ENCODE measurements at regions of chr4 and their contacts with region 1.

Region 1: DNA sequence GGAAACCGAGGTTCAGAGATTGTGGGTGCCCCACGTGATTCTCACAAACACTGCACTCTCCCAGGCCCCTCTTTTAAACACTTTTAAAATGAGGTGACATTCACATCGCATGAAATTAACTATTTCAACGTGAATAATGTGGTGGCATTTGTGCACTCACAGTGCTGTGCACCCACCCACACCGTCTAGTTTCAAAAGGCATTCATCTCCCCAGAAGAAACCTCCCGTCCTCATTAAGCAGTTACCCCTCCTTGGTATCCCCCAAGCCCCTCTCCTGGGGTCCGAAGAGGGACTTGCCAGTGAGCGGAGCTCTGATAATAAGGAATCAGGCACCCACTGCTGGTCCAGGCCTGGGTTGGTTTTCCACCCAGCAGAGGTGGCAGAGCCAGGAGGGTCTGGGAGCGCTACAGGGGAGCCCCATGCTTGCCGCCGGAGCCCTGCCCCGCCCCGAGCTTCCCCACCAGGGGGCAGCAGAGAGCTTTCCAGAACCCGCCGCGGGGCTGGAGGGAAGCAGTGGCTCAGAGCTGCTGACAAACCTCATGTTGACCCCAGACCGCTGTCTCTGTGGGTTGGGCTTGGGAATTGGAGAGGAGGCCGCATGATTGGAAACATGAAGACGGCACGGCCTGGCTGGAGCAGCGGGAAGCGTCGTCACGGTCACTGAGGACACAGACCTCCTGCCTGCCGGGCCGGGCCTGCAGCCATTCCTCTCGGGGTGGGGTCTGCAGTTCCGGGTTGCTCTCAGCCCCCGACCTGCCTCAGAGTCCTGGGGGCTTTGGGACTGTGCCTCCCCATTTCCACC is 27.5 kb upstream of the HTRA3 start:
- DNase-seq: peak; percentile 65 to 90 (median 77)
- ATAC-seq: peak; percentile 82
- H3K4me3 ChIP-seq: no peak overlapping the region
- H3K4me3 Mint-ChIP-seq: no peak overlapping the region
- H3K27ac ChIP-seq: no peak overlapping the region
- H3K27ac Mint-ChIP-seq: peak overlapping the region; percentile 22
- H3K4me1 ChIP-seq: peaks cover 9% of the 10 kb centered on the region
- H3K4me1 Mint-ChIP-seq: peaks cover 12% of the 10 kb centered on the region
- H3K27me3 ChIP-seq: no peaks in the 10 kb centered on the region
- H3K27me3 Mint-ChIP-seq: no peaks in the 10 kb centered on the region
- CTCF ChIP-seq: peak; percentile 95

Region 2: DNA sequence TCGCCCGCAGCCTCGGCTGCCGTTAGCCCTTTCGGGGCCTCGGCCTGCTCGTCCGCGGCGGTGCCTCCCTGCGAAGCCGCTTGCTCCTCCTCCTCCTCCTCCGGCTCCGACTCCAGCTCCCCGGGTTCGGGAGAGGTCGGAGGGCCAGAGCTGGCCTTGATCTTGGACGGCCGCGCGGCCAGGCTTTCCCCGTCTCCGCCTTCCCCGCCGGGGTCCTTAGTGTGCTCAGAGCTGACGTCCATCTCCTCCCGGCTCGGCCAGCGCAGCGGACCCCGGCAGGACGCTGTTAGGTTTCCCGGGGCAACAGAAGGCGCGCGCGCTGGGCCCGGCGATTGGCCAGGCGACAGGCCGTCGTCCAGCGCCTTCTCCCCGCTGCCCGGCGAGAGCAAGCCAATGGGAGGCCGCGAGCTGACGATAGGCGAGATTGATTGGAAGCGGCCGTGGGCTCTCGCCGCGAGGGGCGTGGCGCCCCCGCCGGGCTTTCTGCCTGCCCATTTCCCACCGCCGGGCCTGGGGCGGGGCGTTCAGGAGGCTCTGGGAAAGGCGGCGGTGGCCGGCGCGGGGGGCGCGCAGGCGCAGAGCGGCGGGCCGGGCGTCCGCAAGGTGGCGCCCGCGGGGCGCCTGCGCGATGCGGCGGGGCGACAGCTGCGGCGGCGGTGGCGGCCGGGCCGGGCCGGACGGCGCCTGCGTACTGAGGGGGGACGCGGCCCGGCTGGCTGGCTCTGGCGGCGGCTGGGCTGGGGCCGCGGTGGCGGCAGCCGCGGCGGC is 1199.2 kb before region 1 on chr4 and contains the start of gene TADA2B:
- CTCF ChIA-PET with region 1: no interaction called
- POLR2A ChIA-PET with region 1: no interaction called
- intact Hi-C with region 1: no loop called
- DNase-seq: peak; percentile 74 to 95 (median 89)
- ATAC-seq: peak; percentile 76
- H3K4me3 ChIP-seq: peak within 1 kb of the TSS; percentile 83 to 94
- H3K4me3 Mint-ChIP-seq: peak within 1 kb of the TSS; percentile 91
- H3K27ac ChIP-seq: peak within 1 kb of the TSS; percentile 63 to 84
- H3K27ac Mint-ChIP-seq: peak within 1 kb of the TSS; percentile 88
- H3K4me1 ChIP-seq: peaks cover 40% of the 10 kb centered on the region
- H3K4me1 Mint-ChIP-seq: peaks cover 44% of the 10 kb centered on the region
- H3K27me3 ChIP-seq: no peaks in the 10 kb centered on the region
- H3K27me3 Mint-ChIP-seq: no peaks in the 10 kb centered on the region
- CTCF ChIP-seq: no peak
- total RNA-seq, gene TADA2B: 41.9 to 45.4 TPM

Region 3: GRCh38 chr4:7842384-7843279 is 399.5 kb before region 1 on chr4:
- CTCF ChIA-PET with region 1: no interaction called
- POLR2A ChIA-PET with region 1: no interaction called
- intact Hi-C with region 1: no loop called
- DNase-seq: no peak
- ATAC-seq: no peak
- H3K4me3 ChIP-seq: no peak overlapping the region
- H3K4me3 Mint-ChIP-seq: no peak overlapping the region
- H3K27ac ChIP-seq: no peak overlapping the region
- H3K27ac Mint-ChIP-seq: no peak overlapping the region
- H3K4me1 ChIP-seq: no peaks in the 10 kb centered on the region
- H3K4me1 Mint-ChIP-seq: peaks cover 19% of the 10 kb centered on the region
- H3K27me3 ChIP-seq: no peaks in the 10 kb centered on the region
- H3K27me3 Mint-ChIP-seq: no peaks in the 10 kb centered on the region
- CTCF ChIP-seq: no peak

Region 4: DNA sequence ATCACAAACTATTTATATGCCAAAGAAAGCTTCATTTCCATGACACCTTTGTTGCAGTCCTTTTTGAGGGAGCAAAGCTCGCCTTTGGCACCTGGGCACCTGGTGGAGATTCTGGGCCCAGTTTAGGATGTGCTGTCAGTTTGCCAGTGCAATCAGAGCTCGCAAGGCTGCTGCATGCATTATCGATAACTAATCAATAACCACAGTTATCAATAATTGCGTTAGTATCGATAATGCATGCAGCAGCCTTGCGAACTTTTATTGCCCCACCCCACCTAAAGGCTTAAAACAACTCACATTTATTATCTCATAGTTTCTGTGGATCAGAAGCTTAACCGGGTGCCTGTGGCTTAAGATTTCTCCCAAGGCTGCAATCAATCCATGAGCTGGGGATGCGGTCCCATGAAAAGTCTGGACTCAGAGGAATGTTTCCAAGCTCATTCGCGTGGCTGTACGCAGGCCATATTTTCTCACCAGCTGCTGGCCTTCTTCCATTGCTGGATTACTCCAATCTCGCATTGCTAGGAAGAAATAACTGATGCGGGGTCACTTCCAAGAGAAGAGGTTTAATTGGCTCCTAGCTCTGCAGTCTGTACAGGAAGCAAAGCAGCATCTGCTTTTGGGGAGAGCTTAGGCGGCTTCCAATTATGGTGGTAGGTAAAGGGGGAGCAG is 296.3 kb before region 1 on chr4:
- CTCF ChIA-PET with region 1: no interaction called
- POLR2A ChIA-PET with region 1: no interaction called
- intact Hi-C with region 1: no loop called
- DNase-seq: no peak
- ATAC-seq: no peak
- H3K4me3 ChIP-seq: no peak overlapping the region
- H3K4me3 Mint-ChIP-seq: no peak overlapping the region
- H3K27ac ChIP-seq: no peak overlapping the region
- H3K27ac Mint-ChIP-seq: no peak overlapping the region
- H3K4me1 ChIP-seq: peaks cover 3% of the 10 kb centered on the region
- H3K4me1 Mint-ChIP-seq: peaks cover 7% of the 10 kb centered on the region
- H3K27me3 ChIP-seq: no peaks in the 10 kb centered on the region
- H3K27me3 Mint-ChIP-seq: no peaks in the 10 kb centered on the region
- CTCF ChIP-seq: no peak

Region 5: GRCh38 chr4:8176547-8177399 is 65.3 kb before region 1 on chr4:
- CTCF ChIA-PET with region 1: interaction called, 5 read pairs
- POLR2A ChIA-PET with region 1: no interaction called
- intact Hi-C with region 1: loop called (anchors 1 to 2 kb)
- DNase-seq: peak in 7 of 9 experiments; percentile 21 to 62 (median 57)
- ATAC-seq: peak; percentile 98
- H3K4me3 ChIP-seq: no peak overlapping the region
- H3K4me3 Mint-ChIP-seq: no peak overlapping the region
- H3K27ac ChIP-seq: no peak overlapping the region
- H3K27ac Mint-ChIP-seq: no peak overlapping the region
- H3K4me1 ChIP-seq: no peaks in the 10 kb centered on the region
- H3K4me1 Mint-ChIP-seq: peaks cover 2% of the 10 kb centered on the region
- H3K27me3 ChIP-seq: no peaks in the 10 kb centered on the region
- H3K27me3 Mint-ChIP-seq: peaks cover 2% of the 10 kb centered on the region
- CTCF ChIP-seq: peak; percentile 68

Region 6: GRCh38 chr4:8228319-8229250 is 13.5 kb before region 1 on chr4:
- CTCF ChIA-PET with region 1: interaction called, 14 read pairs
- POLR2A ChIA-PET with region 1: interaction called, 5 read pairs
- intact Hi-C with region 1: loop called in 1 of 2 experiments (anchors 2 kb)
- DNase-seq: peak; percentile 47 to 90 (median 71)
- ATAC-seq: peak; percentile 80
- H3K4me3 ChIP-seq: peak overlapping the region; percentile 8 to 18
- H3K4me3 Mint-ChIP-seq: peak overlapping the region; percentile 65
- H3K27ac ChIP-seq: peak overlapping the region; percentile 6 to 16
- H3K27ac Mint-ChIP-seq: peak overlapping the region; percentile 90
- H3K4me1 ChIP-seq: peaks cover 59% of the 10 kb centered on the region
- H3K4me1 Mint-ChIP-seq: peaks cover 63% of the 10 kb centered on the region
- H3K27me3 ChIP-seq: peaks cover 0 to 2% of the 10 kb centered on the region in 2 experiments
- H3K27me3 Mint-ChIP-seq: no peaks in the 10 kb centered on the region
- CTCF ChIP-seq: no peak

Region 7: DNA sequence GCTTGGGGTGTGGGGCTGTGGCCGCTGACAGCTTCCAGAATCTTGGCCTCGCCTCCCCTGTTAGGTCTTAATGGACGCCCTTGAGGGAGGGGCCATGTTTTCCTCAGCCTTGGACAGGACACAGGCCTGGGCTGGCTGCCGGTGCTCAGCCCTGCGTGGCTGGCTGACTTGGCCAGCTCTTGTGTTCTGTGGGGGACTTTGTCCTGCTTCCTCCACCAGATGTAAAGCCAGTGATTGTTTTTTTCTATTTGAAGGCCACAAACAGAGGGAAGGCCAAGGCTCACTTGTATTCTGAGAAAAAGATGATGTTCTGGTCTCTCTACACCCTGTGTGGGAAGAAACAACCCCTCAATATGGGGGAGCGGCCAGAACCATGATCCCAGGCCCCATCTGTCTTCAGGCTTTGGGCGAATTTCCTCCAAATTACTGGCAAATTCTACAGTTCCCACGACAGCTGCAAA is 98.7 kb after region 1 on chr4:
- CTCF ChIA-PET with region 1: no interaction called
- POLR2A ChIA-PET with region 1: no interaction called
- intact Hi-C with region 1: no loop called
- DNase-seq: no peak
- ATAC-seq: no peak
- H3K4me3 ChIP-seq: no peak overlapping the region
- H3K4me3 Mint-ChIP-seq: no peak overlapping the region
- H3K27ac ChIP-seq: no peak overlapping the region
- H3K27ac Mint-ChIP-seq: no peak overlapping the region
- H3K4me1 ChIP-seq: no peaks in the 10 kb centered on the region
- H3K4me1 Mint-ChIP-seq: no peaks in the 10 kb centered on the region
- H3K27me3 ChIP-seq: no peaks in the 10 kb centered on the region
- H3K27me3 Mint-ChIP-seq: no peaks in the 10 kb centered on the region
- CTCF ChIP-seq: no peak

Region 8: GRCh38 chr4:8403173-8403753 is 161.2 kb after region 1 on chr4:
- CTCF ChIA-PET with region 1: interaction called, 7 read pairs
- POLR2A ChIA-PET with region 1: no interaction called
- intact Hi-C with region 1: loop called (anchors 1 kb)
- DNase-seq: peak in 8 of 9 experiments; percentile 19 to 61 (median 56)
- ATAC-seq: peak; percentile 51
- H3K4me3 ChIP-seq: no peak overlapping the region
- H3K4me3 Mint-ChIP-seq: no peak overlapping the region
- H3K27ac ChIP-seq: no peak overlapping the region
- H3K27ac Mint-ChIP-seq: no peak overlapping the region
- H3K4me1 ChIP-seq: no peaks in the 10 kb centered on the region
- H3K4me1 Mint-ChIP-seq: no peaks in the 10 kb centered on the region
- H3K27me3 ChIP-seq: no peaks in the 10 kb centered on the region
- H3K27me3 Mint-ChIP-seq: no peaks in the 10 kb centered on the region
- CTCF ChIP-seq: peak; percentile 83

Region 9: GRCh38 chr4:8917868-8918783 is 676.0 kb after region 1 on chr4:
- CTCF ChIA-PET with region 1: no interaction called
- POLR2A ChIA-PET with region 1: no interaction called
- intact Hi-C with region 1: loop called in 1 of 2 experiments (anchors 5 kb)
- DNase-seq: peak; percentile 42 to 72 (median 54)
- ATAC-seq: peak; percentile 59
- H3K4me3 ChIP-seq: no peak overlapping the region
- H3K4me3 Mint-ChIP-seq: no peak overlapping the region
- H3K27ac ChIP-seq: no peak overlapping the region
- H3K27ac Mint-ChIP-seq: no peak overlapping the region
- H3K4me1 ChIP-seq: peaks cover 5% of the 10 kb centered on the region
- H3K4me1 Mint-ChIP-seq: peaks cover 2% of the 10 kb centered on the region
- H3K27me3 ChIP-seq: peaks cover 0 to 2% of the 10 kb centered on the region in 2 experiments
- H3K27me3 Mint-ChIP-seq: peaks cover 15% of the 10 kb centered on the region
- CTCF ChIP-seq: peak; percentile 57